Endothelial cell of umbilical vein (primary cell): ENCODE measurements at regions of chr10 and their contacts with region 1.

Region 1: GRCh38 chr10:43160919-43161251 is 22.6 kb downstream of the CSGALNACT2 start:
- DNase-seq: no peak
- H3K4me3 ChIP-seq: no peak overlapping the region
- H3K27ac ChIP-seq: peak overlapping the region; percentile 53
- H3K4me1 ChIP-seq: peaks cover 15% of the 10 kb centered on the region
- H3K27me3 ChIP-seq: no peaks in the 10 kb centered on the region
- CTCF ChIP-seq: no peak
- POLR2A ChIP-seq: no peak

Region 2: DNA sequence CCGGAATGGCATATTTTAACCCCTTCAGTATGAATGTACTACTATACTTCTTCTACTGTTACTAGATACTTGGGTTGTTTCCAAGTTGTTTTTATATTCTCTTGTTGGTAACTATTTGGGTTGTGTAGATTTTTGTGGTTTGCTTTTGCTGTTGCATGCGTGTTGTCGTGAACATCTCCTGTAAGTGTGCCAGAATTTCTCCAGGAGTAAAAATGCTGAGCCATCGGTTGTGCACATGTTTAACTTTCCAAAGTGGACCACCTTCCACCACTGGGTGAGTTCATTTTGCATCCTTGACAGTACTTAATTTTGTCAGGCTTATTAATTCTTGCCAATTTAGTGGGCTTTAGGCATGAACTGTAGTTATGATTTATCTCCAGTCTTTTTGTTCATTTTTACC is 25.3 kb after region 1 on chr10:
- CTCF ChIA-PET with region 1: no interaction called
- POLR2A ChIA-PET with region 1: no interaction called
- dilution Hi-C with region 1: no loop called
- intact Hi-C with region 1: loop called (anchors 1 kb)
- DNase-seq: no peak
- H3K4me3 ChIP-seq: no peak overlapping the region
- H3K27ac ChIP-seq: no peak overlapping the region
- H3K4me1 ChIP-seq: no peaks in the 10 kb centered on the region
- H3K27me3 ChIP-seq: no peaks in the 10 kb centered on the region
- CTCF ChIP-seq: no peak
- POLR2A ChIP-seq: no peak